Activated naive CD4-positive, alpha-beta T cell treated with anti-CD3 and anti-CD28 coated beads for 36 hours (primary cell): ENCODE measurements at regions of chr7 and their contacts with region 1.

Region 1: GRCh38 chr7:134710859-134711624 is 64.4 kb downstream of the BPGM start:
- DNase-seq: peak; percentile 84
- H3K4me3 Mint-ChIP-seq: peak overlapping the region; percentile 42
- H3K27ac Mint-ChIP-seq: peak overlapping the region; percentile 91
- H3K4me1 Mint-ChIP-seq: peaks cover 16% of the 10 kb centered on the region
- H3K27me3 Mint-ChIP-seq: no peaks in the 10 kb centered on the region

Region 2: DNA sequence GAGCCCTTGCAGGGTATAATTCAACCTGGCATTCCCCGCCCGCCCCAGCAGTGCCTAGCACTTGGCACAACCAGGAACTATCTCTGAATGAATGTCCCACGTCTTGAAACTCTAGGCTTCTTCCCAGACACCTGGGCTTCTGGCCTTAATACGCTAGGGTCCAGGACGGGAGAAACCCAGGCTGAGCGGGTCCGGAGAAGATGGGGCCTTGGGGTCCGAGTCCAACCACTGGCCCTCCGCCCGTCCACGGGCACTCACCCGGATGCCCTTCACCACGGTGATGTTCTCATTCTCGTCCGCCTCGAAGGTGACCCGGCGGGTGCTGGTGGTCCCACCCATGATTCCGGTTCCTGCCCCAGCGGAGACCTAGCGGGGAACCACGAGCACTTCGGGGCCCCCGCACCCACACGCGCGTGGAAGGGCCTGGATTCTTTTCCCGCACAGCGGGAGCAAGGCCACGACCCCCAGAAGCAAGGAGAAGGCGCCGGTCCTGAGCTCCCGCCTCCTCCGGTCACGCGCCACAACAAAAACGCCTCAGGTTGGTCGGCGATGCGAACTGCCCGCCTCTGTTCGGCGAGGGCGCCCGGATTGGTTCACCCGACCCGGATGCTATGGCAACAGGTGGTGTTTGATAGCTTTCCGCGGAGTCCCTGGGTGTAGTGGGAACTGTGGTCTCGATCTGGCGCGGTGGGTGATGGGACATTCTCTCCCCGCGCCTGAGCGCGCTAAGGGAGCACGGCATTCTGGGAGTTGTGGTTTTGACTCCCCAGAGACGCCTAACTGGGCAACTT is 1629.2 kb before region 1 on chr7 and contains the start of gene CHCHD3:
- CTCF ChIA-PET with region 1: no interaction called
- intact Hi-C with region 1: loop called (anchors 2 kb)
- DNase-seq: peak; percentile 99
- H3K4me3 Mint-ChIP-seq: peak within 1 kb of the TSS; percentile 78
- H3K27ac Mint-ChIP-seq: peak within 1 kb of the TSS; percentile 78
- H3K4me1 Mint-ChIP-seq: peaks cover 27% of the 10 kb centered on the region
- H3K27me3 Mint-ChIP-seq: no peaks in the 10 kb centered on the region
- total RNA-seq, gene CHCHD3: 62.0 to 65.0 TPM

Region 3: GRCh38 chr7:134669845-134670373 is 41.1 kb before region 1 on chr7:
- CTCF ChIA-PET with region 1: no interaction called
- intact Hi-C with region 1: loop called (anchors 1 kb)
- DNase-seq: peak; percentile 88
- H3K4me3 Mint-ChIP-seq: peak overlapping the region; percentile 65
- H3K27ac Mint-ChIP-seq: peak overlapping the region; percentile 85
- H3K4me1 Mint-ChIP-seq: peaks cover 52% of the 10 kb centered on the region
- H3K27me3 Mint-ChIP-seq: no peaks in the 10 kb centered on the region

Region 4: DNA sequence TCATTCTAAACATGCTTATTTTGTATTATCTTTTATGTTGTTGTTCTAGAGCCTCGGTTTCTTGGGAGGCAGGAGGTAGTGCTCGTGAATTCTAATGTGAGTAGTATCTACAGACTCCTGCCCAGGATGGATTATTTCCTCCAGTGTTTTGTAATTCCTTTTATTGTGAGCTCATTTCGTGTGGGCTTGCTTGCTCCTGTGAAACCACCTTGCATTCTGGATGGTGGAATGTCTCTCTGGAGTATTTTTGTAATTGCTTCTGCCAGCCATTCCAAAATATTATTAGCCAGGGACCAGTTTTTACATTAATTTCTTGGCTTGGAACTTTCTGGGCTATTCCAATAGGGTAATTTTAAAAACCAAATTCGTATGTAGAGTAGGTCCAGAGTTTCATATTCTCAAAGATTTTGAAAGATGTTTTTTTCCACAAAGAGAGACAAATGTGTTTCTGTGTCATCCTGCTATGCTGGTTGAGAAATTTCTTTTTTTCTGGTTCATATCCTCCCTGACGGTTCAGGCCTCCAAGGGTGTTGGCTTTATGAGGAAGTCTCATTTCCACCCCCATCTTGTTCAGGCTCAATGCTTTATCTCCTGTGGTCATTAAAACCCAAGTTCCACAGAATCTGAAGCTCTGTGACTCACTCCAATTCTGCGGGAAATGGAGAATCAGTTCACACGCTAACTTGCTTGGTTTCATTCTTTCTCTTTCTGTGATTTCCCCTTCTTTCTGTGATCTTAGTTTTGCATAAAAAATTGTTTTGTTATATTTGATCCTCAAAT is 26.7 kb after region 1 on chr7:
- CTCF ChIA-PET with region 1: no interaction called
- intact Hi-C with region 1: loop called (anchors 1 kb)
- DNase-seq: peak; percentile 47
- H3K4me3 Mint-ChIP-seq: no peak overlapping the region
- H3K27ac Mint-ChIP-seq: peak overlapping the region; percentile 20
- H3K4me1 Mint-ChIP-seq: peaks cover 10% of the 10 kb centered on the region
- H3K27me3 Mint-ChIP-seq: no peaks in the 10 kb centered on the region

Region 5: DNA sequence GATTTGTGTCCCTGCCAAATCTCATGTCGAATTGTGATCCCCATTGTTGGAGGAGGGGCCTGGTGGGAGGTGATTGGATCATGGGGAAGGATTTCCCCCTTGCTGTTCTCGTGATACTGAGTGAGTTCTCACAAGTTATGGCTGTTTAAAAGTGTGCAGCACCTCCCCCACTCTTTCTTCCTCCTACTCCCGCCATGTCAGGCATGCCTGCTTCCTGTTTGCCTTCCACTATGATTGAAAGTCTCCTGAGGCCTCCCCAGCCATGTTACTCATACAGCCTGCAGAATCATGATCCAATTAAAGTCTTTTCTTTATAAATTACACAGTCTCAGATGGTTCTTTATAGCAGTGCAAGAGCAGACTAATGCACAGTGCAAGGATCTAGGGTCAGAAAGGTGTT is 143.8 kb after region 1 on chr7:
- CTCF ChIA-PET with region 1: no interaction called
- intact Hi-C with region 1: loop called (anchors 2 kb)
- DNase-seq: peak; percentile 65
- H3K4me3 Mint-ChIP-seq: no peak overlapping the region
- H3K27ac Mint-ChIP-seq: peak overlapping the region; percentile 7
- H3K4me1 Mint-ChIP-seq: peaks cover 47% of the 10 kb centered on the region
- H3K27me3 Mint-ChIP-seq: no peaks in the 10 kb centered on the region

Region 6: DNA sequence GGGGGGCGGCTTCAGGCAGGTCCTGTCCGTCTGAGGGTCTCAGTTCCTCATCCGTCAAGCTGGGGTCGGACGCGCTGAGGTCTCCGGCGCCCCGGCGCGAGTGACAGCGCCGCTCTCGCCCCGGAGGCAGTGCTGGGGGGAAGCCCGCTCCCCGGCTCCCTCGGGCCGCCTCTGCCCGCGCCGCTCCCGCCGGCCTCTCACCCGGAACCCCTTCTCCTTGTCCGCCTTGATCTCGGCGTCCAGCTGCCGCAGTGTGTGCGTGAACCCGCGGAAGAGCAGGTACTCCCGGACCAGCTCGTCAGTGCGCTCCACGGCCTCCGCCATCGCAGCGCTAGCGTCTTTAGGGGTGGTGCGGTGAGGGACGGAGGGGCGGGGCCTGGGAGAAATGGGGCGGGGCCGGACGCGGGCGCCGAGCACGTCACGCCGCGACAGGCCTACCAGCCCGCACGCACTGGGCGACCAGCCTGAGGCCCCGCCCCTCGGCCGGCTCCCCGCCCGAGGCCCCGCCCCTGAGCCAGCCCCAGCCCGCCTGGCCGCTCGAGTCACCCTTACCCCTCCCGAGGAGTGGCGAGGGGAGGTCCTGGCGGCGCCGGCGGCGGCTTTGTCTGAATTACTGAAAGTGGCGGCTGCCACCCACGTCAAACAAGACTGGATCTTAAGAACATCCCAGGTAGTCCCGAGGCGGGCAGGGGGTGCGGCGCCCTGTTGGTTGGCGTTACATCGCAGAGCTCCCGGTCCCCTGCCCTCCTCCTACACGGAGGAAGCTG is 500.3 kb after region 1 on chr7 and contains the start of gene WDR91:
- CTCF ChIA-PET with region 1: no interaction called
- intact Hi-C with region 1: loop called (anchors 1 kb)
- DNase-seq: peak; percentile 96
- H3K4me3 Mint-ChIP-seq: peak within 1 kb of the TSS; percentile 98
- H3K27ac Mint-ChIP-seq: peak within 1 kb of the TSS; percentile 85
- H3K4me1 Mint-ChIP-seq: peaks cover 41% of the 10 kb centered on the region
- H3K27me3 Mint-ChIP-seq: no peaks in the 10 kb centered on the region
- total RNA-seq, gene WDR91: 10.6 to 11.1 TPM